ENCODE measurements at regions of chr12 and their contacts with region 1.

Region 1: GRCh38 chr12:113196996-113197395 is 11.5 kb downstream of the RITA1 start:
- DNase-seq: peak; percentile 79
- H3K4me3 ChIP-seq: no peak overlapping the region
- H3K27ac ChIP-seq: no peak overlapping the region
- H3K4me1 ChIP-seq: no peaks in the 10 kb centered on the region
- H3K27me3 ChIP-seq: no peaks in the 10 kb centered on the region
- CTCF ChIP-seq: peak; percentile 67

Region 2: GRCh38 chr12:112992541-112993398 is 204.2 kb before region 1 on chr12:
- intact Hi-C with region 1: no loop called
- DNase-seq: peak; percentile 72
- H3K4me3 ChIP-seq: no peak overlapping the region
- H3K27ac ChIP-seq: no peak overlapping the region
- H3K4me1 ChIP-seq: no peaks in the 10 kb centered on the region
- H3K27me3 ChIP-seq: no peaks in the 10 kb centered on the region
- CTCF ChIP-seq: peak; percentile 85

Region 3: GRCh38 chr12:113271853-113272561 is 75.0 kb after region 1 on chr12:
- intact Hi-C with region 1: loop called (anchors 5 kb)
- DNase-seq: peak; percentile 66
- H3K4me3 ChIP-seq: no peak overlapping the region
- H3K27ac ChIP-seq: peak overlapping the region; percentile 66
- H3K4me1 ChIP-seq: no peaks in the 10 kb centered on the region
- H3K27me3 ChIP-seq: no peaks in the 10 kb centered on the region
- CTCF ChIP-seq: no peak

Region 4: DNA sequence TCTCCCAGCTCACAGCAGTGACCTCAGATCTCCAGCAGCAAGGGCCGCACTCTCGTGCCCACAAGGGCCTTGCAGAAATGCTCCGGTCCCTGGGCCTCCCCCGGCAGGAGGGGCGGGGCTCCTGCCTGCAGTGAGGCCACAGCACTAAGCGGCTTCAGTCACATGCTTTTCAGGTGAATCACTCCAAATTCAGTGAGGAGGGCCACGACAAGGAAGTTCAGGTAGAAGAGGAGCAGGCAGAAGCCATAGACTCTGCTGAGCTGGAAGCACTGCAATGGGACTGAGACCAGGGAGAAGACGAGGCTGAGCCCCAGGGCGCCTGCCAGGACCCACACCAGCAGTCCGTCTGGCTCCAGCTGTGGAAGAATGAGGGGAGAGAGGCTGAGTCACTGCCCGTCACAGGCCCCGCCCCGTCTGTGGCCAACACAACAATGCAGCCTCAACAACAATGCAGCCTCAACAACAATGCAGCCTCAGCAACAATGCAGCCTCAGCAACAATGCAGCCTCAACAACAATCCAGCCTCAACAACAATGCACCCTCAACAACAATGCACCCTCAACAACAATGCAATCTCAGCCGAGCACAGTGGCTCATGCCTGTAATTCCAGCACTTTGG is 102.7 kb after region 1 on chr12:
- intact Hi-C with region 1: loop called (anchors 10 kb)
- DNase-seq: peak; percentile 33
- H3K4me3 ChIP-seq: no peak overlapping the region
- H3K27ac ChIP-seq: peak overlapping the region; percentile 8
- H3K4me1 ChIP-seq: no peaks in the 10 kb centered on the region
- H3K27me3 ChIP-seq: no peaks in the 10 kb centered on the region
- CTCF ChIP-seq: no peak

Region 5: GRCh38 chr12:113422030-113422885 is 225.3 kb after region 1 on chr12 and contains the start of gene SDSL:
- intact Hi-C with region 1: loop called (anchors 5 kb)
- DNase-seq: peak; percentile 83
- H3K4me3 ChIP-seq: peak within 1 kb of the TSS; percentile 58
- H3K27ac ChIP-seq: peak within 1 kb of the TSS; percentile 59
- H3K4me1 ChIP-seq: no peaks in the 10 kb centered on the region
- H3K27me3 ChIP-seq: no peaks in the 10 kb centered on the region
- CTCF ChIP-seq: no peak
- total RNA-seq, gene SDSL: 14.2 to 35.2 TPM

Region 6: DNA sequence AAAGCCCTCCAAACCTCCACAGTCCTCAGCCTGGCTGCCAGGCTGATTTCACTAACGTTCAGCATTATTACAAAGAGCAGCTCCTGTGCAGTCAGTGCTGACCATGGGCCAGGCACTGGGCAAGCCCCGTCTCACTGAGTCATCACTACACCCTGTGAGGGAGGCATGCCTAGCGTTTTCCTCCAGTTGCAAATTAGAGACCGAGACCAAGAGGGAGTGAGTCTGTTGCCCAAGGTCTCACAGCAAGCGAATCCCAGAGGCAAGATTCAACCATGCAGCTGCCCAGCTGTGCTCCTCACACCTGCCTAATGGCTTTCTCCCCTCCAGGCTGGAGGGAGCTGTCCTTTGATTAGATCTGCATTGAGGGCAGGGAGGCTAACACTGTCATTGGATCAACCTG is 503.9 kb after region 1 on chr12:
- intact Hi-C with region 1: no loop called
- DNase-seq: no peak
- H3K4me3 ChIP-seq: no peak overlapping the region
- H3K27ac ChIP-seq: no peak overlapping the region
- H3K4me1 ChIP-seq: no peaks in the 10 kb centered on the region
- H3K27me3 ChIP-seq: no peaks in the 10 kb centered on the region
- CTCF ChIP-seq: no peak